ENCODE measurements at regions of chr12 and their contacts with region 1.

Region 1: DNA sequence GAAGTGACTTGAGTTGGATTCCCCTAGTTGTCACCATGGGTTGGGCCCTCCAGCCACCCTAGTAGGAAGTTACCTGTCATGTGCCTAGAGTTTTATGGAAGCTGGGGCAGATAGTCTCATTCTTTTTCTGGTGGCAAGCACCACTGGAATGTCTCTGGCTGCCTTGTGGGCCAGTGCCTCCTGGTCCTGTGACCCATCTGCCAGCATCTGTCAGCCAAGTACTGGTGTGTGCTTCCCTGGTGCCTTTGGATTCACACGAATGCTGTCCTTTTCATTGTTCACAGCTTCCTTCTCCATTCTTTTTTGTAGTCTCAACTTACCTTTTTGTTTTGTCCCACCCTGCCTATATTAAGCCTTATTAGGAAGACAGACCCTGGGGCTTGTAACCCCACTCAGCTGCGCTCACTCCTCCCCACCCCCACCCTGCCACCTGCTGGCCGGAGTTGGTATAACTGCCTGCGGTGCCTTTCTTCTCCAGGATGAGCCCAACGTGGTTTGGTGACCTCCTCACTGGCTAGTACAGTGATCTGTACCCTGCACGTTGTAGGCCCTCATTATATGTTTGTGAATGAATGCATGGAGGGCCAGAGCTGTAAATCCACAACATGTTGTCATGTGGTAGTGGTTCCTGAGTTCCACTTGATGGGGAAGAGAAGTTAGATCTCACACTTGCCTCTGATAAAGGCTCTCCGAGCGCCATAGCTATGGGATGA is 125.7 kb downstream of the TSPAN9 start:
- DNase-seq: peak in 1 of 2 donors; percentile 62
- ATAC-seq: peak; percentile 47

Region 2: DNA sequence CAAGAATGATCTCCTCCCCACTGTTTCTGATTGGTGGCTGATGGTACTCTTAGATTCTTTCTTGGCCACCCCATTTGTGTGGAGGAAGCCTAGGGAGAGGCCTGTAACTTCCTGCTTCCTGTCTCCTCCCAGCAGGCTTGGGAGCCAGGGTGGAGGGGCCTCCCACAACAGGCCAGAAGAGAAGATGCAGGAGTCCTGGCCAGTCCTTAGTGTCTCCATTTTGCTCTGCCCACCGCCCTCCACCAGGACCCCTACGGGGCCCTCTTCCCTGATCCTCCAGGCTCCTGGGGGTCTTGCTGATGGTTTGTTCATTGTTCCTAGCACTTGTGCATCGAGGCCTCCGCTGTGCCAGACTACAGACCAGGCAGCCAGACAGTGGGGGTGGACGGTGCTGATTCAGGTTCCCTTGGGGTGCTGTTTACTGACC is 119.0 kb before region 1 on chr12:
- intact Hi-C with region 1: no loop called
- DNase-seq: no peak
- ATAC-seq: peak; percentile 43

Region 3: GRCh38 chr12:3135522-3136461 is 67.1 kb before region 1 on chr12:
- intact Hi-C with region 1: loop called in 1 of 2 experiments (anchors 5 kb)
- DNase-seq: peak in 1 of 2 donors; percentile 23
- ATAC-seq: peak; percentile 79

Measured in left colon (tissue), 2 donors.